ENCODE measurements at regions of chr15 and their contacts with region 1.

Region 1: GRCh38 chr15:99495430-99496301 is 70.1 kb upstream of the MEF2A start:
- DNase-seq: peak; percentile 60
- ATAC-seq: peak; percentile 89
- H3K4me3 Mint-ChIP-seq: peak overlapping the region; percentile 80
- H3K27ac Mint-ChIP-seq: peak overlapping the region; percentile 96
- H3K4me1 Mint-ChIP-seq: peaks cover 32% of the 10 kb centered on the region
- H3K27me3 Mint-ChIP-seq: no peaks in the 10 kb centered on the region

Region 2: DNA sequence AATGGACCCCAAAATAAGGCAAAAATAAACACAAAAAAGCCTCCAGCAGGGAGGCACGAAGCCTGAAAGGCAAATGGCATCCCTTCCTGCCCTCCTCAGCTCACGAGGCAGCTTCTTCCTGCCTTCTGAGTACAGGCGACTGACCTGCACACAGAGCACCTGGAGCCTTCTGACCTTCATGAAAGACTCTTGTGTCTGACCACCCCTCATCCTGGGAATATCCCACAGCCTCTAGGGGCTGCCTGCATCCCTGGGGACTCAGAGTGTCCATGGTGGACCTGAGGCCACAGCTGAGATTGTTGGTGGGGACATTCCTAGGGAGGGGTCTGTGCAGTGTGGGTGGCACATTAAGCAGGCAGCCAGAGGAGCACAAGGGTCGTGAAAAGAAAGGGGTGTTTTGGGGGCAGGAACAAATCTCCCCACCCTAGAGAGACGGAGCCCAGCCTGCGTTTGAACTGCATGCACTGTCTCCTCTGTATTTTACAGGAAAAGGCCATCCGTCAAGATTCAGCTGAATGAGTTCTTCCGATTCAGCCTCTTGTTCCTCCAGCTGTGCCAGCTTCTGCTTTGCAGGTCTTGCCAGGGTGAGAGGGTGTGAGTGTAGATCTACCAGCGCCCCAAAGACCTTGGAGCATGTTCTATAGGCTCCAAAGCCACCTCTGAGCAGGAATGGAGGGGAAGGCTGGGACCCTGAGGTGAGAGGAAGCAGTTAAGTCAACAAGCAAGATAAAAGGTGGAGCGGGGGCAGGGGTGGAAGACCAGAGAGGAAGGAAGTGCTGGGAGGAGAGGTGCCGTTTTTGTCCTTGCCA is 10.3 kb before region 1 on chr15:
- POLR2A ChIA-PET with region 1: interaction called, 14 read pairs
- DNase-seq: no peak
- ATAC-seq: peak; percentile 35
- H3K4me3 Mint-ChIP-seq: peak overlapping the region; percentile 50
- H3K27ac Mint-ChIP-seq: peak overlapping the region; percentile 81
- H3K4me1 Mint-ChIP-seq: peaks cover 27% of the 10 kb centered on the region
- H3K27me3 Mint-ChIP-seq: peaks cover 19% of the 10 kb centered on the region